ENCODE measurements at regions of chr2 and their contacts with region 1.

Region 1: DNA sequence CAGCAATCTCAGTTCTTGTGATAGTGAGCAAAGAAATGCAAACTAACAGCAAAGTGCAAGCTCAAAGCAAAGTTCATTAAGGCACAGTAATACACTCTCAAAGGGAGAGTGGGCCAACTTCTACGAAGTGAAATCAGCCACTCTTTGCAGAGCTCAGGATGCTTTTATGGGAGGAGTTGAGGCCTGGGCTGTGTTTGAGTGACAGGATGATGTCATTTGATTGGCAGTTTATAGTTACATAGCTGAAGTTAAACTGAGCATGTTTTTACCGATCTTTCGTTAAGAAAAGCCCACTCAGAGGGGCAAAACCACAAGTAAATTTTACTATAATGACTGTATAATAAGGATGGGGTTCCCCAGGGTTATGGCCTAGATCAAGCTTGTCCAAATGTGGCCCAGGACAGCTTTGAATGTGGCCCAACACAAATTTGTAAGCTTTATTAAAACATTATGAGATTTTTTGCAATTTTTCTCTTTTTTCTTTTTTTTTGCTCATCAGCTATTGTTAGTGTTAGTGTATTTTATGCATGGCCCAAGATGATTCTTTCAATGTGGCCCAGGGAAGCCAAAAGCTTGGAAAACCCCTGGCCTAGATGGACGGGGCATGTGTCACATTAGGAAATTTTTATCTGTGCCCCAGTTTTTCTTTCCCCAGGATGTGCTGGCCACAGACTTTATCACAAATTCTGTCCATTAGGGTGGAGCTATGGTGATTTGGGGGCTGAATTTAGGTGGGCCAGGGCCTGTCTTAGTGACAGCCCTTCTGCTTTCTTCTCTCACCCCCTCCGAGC is 8.3 kb upstream of the DNAH7 start:
- DNase-seq: no peak
- ATAC-seq: no peak
- H3K4me3 Mint-ChIP-seq: no peak overlapping the region
- H3K27ac Mint-ChIP-seq: peak overlapping the region; percentile 1
- H3K4me1 Mint-ChIP-seq: peaks cover 38% of the 10 kb centered on the region
- H3K27me3 Mint-ChIP-seq: no peaks in the 10 kb centered on the region
- CTCF ChIP-seq: no peak

Region 2: GRCh38 chr2:196131384-196131937 is 54.5 kb after region 1 on chr2:
- CTCF ChIA-PET with region 1: no interaction called
- POLR2A ChIA-PET with region 1: no interaction called
- intact Hi-C with region 1: loop called (anchors 2 kb)
- DNase-seq: no peak
- ATAC-seq: peak; percentile 44
- H3K4me3 Mint-ChIP-seq: no peak overlapping the region
- H3K27ac Mint-ChIP-seq: peak overlapping the region; percentile 46
- H3K4me1 Mint-ChIP-seq: no peaks in the 10 kb centered on the region
- H3K27me3 Mint-ChIP-seq: no peaks in the 10 kb centered on the region
- CTCF ChIP-seq: no peak

Region 3: GRCh38 chr2:196149948-196150347 is 73.0 kb after region 1 on chr2:
- CTCF ChIA-PET with region 1: interaction called, 18 read pairs
- POLR2A ChIA-PET with region 1: interaction called, 3 read pairs
- intact Hi-C with region 1: no loop called
- DNase-seq: no peak
- ATAC-seq: peak; percentile 71
- H3K4me3 Mint-ChIP-seq: peak overlapping the region; percentile 70
- H3K27ac Mint-ChIP-seq: peak overlapping the region; percentile 93
- H3K4me1 Mint-ChIP-seq: peaks cover 78% of the 10 kb centered on the region
- H3K27me3 Mint-ChIP-seq: no peaks in the 10 kb centered on the region
- CTCF ChIP-seq: no peak

Region 4: GRCh38 chr2:196205881-196206435 is 129.0 kb after region 1 on chr2:
- CTCF ChIA-PET with region 1: interaction called, 3 read pairs
- POLR2A ChIA-PET with region 1: no interaction called
- intact Hi-C with region 1: loop called (anchors 2 kb)
- DNase-seq: no peak
- ATAC-seq: no peak
- H3K4me3 Mint-ChIP-seq: no peak overlapping the region
- H3K27ac Mint-ChIP-seq: peak overlapping the region; percentile 51
- H3K4me1 Mint-ChIP-seq: peaks cover 47% of the 10 kb centered on the region
- H3K27me3 Mint-ChIP-seq: no peaks in the 10 kb centered on the region
- CTCF ChIP-seq: no peak

Region 5: GRCh38 chr2:196291873-196292800 is 215.2 kb after region 1 on chr2:
- CTCF ChIA-PET with region 1: interaction called, 11 read pairs
- POLR2A ChIA-PET with region 1: no interaction called
- intact Hi-C with region 1: no loop called
- DNase-seq: no peak
- ATAC-seq: peak; percentile 59
- H3K4me3 Mint-ChIP-seq: peak overlapping the region; percentile 57
- H3K27ac Mint-ChIP-seq: peak overlapping the region; percentile 74
- H3K4me1 Mint-ChIP-seq: peaks cover 54% of the 10 kb centered on the region
- H3K27me3 Mint-ChIP-seq: no peaks in the 10 kb centered on the region
- CTCF ChIP-seq: no peak

Region 6: GRCh38 chr2:196453613-196454047 is 376.7 kb after region 1 on chr2:
- CTCF ChIA-PET with region 1: interaction called, 62 read pairs
- POLR2A ChIA-PET with region 1: interaction called, 3 read pairs
- intact Hi-C with region 1: loop called (anchors 1 kb)
- DNase-seq: no peak
- ATAC-seq: peak; percentile 65
- H3K4me3 Mint-ChIP-seq: no peak overlapping the region
- H3K27ac Mint-ChIP-seq: no peak overlapping the region
- H3K4me1 Mint-ChIP-seq: no peaks in the 10 kb centered on the region
- H3K27me3 Mint-ChIP-seq: peaks cover 9% of the 10 kb centered on the region
- CTCF ChIP-seq: no peak

Measured in activated B cell treated with CpG ODN at 0.5 μM for 24 hours (primary cell).